Dorsolateral prefrontal cortex (tissue), 120 donors: ENCODE measurements at regions of chr5 and their contacts with region 1.

Region 1: DNA sequence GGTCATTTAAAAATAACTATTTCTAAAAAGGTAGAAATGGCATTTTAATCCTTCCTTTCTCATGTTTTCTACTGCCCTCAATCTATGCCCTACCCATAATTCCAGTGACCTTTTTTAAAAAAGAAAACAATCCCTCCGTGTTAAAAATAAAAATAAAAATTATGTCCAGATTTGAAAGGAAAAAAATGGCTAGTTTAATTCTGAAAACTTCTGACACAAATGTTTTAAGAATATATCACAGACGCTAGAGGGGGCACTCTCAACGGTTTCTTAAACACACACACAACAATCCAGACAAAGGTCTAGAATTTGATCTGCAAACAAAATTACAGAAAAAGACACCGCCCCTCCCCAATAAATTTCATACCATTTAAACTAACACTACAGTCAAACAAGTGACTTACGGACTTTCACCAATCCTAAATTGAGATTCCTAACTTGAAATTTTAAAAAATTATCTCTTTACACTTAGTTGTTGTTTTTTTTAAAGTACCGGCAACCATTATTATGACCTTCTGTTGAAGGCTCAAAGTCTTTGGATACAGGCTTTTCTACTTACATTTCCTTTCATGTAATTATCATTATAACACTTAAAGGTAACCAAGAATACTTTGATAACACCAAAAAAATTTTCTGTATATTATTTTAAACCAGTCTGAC is 38.2 kb downstream of the CLINT1 start:
- DNase-seq: no peak
- H3K4me3 ChIP-seq: no peak overlapping the region
- H3K27ac ChIP-seq: peak overlapping the region in 2 of 59 donors; percentile 16 to 33
- H3K27me3 ChIP-seq: no peaks in the 10 kb centered on the region
- CTCF ChIP-seq: peak; percentile 25 to 71 (median 55)

Region 2: GRCh38 chr5:157858527-157859226 is 38.0 kb after region 1 on chr5 and contains the start of gene CLINT1:
- intact Hi-C with region 1: loop called in 1 of 2 experiments (anchors 5 kb)
- DNase-seq: peak; percentile 85 to 97 (median 92)
- H3K4me3 ChIP-seq: peak within 1 kb of the TSS; percentile 70 to 99 (median 90)
- H3K27ac ChIP-seq: peak within 1 kb of the TSS in 51 of 59 donors; percentile 8 to 91 (median 66)
- H3K27me3 ChIP-seq: no peaks in the 10 kb centered on the region
- CTCF ChIP-seq: peak in 39 of 56 donors; percentile 16 to 62 (median 34)
- total RNA-seq, gene CLINT1: 30.7 to 54.6 (median 40.7) TPM

Region 3: DNA sequence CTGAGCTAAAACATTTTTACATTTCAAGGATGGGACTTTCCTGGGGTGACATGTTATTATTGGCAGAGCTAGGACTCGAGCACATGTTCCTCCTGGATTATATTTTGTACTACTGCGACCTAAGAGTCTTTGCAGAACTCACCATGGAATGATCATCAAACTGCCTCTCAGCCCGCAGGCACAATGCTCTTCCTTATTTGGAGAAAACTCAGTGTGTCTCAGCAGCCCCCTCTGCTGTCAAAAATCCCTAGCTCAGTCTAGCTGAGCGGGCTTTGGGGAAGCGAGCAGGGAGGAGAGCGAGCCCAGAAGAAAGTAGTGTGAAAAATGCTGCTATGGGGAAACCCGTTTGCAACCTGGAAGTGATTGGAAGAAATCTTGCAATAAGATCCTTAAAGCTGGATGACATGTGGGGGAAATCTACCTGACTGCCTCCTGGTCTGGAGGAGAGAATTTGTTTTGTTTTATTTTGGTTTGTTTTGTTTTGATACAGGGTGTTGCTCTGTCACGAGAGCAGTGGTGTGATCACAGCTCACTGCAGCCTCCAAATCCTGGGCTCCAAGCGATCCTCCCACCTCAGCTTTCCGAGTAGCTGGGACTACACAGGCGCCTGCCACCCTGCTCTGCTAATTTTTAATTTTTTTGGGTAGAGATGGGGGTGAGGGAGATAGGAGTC is 128.2 kb after region 1 on chr5:
- intact Hi-C with region 1: loop called (anchors 2 to 5 kb)
- DNase-seq: peak; percentile 46 to 90 (median 82)
- H3K4me3 ChIP-seq: peak overlapping the region in 12 of 59 donors; percentile 4 to 31 (median 13)
- H3K27ac ChIP-seq: no peak overlapping the region
- H3K27me3 ChIP-seq: peaks cover 0 to 45% (median 0%) of the 10 kb centered on the region in 45 donors
- CTCF ChIP-seq: peak; percentile 68 to 95 (median 87)

Region 4: DNA sequence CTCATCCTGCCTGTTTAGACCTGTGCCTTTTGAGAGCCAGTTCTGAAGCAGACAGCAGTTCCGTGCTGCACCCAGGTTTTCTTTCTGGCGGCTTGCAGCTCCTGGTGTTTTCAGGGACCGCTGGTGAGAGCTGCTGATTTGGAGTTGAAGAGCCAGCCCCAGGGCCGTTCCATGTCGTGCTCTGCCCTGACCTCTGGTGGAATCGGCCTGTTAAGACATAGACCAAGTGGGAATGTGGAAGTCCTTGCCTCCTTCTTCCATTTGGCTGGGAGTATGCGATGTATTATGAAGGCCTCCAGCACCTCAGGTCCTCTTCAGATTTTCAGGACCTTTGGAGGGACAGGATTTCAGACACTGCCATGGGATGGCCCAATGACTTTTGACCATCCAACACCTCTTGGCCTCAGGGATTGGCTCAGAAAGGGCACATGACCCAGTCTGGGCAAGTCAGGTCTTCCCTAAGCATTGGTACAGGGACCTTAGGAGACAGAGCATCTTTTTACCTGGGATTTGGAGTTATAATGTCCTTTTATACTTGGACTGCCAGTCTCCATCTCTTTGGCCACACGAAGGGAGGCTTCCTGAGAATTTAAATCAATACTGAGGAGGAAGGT is 174.3 kb after region 1 on chr5:
- intact Hi-C with region 1: loop called in 1 of 2 experiments (anchors 2 kb)
- DNase-seq: peak in 6 of 10 donors; percentile 21 to 65 (median 40)
- H3K4me3 ChIP-seq: no peak overlapping the region
- H3K27ac ChIP-seq: no peak overlapping the region
- H3K27me3 ChIP-seq: peaks cover 0 to 12% (median 0%) of the 10 kb centered on the region in 45 donors
- CTCF ChIP-seq: peak in 54 of 56 donors; percentile 31 to 76 (median 62)

Region 5: DNA sequence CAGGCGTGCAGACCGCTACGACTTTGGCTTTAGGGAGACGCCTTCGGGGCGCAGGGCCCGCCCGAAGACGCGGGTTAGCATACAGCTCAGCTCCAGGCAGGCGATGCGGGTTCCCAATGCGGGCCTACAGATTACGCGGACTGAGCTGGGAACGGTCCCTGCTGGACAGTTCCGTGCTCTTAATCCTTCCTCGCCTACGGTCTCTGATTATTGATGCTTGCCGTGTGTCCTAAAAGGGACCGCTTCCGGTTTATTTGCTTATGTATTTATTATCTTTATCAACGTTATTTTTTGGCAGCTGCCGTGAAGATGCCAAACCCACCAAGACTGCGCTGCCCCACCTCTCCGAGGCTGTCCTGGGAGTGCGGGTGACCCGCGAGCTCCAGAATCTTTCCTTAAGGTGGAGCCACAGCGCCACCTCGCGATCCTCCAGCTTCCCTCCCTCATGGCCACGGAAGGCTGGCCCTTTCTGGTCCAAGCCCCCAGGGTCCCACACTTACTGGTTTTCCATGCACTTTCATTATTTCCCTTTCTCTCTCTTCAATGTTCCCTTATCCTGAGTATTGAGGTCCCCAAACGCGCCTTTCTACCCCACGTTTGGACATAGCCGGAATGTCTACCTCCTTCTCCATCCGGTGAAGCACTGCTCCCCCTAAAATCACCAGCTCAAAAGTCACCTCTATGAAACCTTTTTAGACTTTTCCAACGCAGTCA is 1286.0 kb after region 1 on chr5:
- intact Hi-C with region 1: loop called in 1 of 2 experiments (anchors 10 kb)
- DNase-seq: peak in 8 of 10 donors; percentile 64 to 83 (median 73)
- H3K4me3 ChIP-seq: peak overlapping the region in 57 of 59 donors; percentile 16 to 70 (median 47)
- H3K27ac ChIP-seq: no peak overlapping the region
- H3K27me3 ChIP-seq: peaks cover 0 to 99% (median 78%) of the 10 kb centered on the region in 45 donors
- CTCF ChIP-seq: peak; percentile 54 to 99 (median 93)